Dendritic cell treated with granulocyte-macrophage colony-stimulating factor and Interleukin-4, amounts not matched to agents 40 ng/mL and 50 ng/mL, for 4 days (primary cell): ENCODE measurements at regions of chr12 and their contacts with region 1.

Region 1: DNA sequence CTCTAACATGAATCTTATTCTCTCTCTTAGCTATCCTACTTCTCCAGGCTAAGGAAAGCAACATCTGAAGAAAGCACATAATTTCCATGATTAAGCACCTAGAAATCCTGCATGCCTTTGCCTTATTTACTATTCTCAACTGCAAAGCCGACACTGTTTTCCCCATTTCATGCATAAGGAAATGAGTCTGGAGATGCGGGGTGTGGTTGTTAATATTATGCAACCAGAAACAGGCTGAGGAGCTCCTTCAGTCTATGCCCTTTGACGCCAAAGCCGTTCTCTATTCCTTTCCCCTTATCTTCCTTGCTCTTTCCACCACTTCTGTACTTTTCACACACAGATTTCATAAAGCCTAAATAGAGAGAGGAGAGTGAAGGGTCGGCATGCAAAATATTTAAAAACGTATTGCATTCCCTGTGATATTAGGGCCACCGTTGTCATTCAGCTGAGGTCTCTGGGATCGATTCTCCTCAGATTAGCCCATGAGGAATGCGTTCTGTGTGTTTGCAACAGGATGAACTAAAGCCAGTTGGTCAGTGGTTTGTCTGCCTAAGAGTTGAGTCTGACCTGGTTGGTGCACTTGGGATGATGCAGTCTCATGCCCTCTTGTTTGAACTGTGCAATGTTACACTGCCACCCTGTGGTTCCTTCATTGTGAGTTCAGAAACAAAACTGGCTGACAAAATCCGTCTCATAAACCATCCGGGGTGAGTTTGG is 53.1 kb upstream of the PLEKHG7 start:
- H3K4me3 Mint-ChIP-seq: no peak overlapping the region
- H3K27ac Mint-ChIP-seq: peak overlapping the region; percentile 55
- H3K4me1 Mint-ChIP-seq: peaks cover 11% of the 10 kb centered on the region
- H3K27me3 Mint-ChIP-seq: peaks cover 2% of the 10 kb centered on the region

Region 2: DNA sequence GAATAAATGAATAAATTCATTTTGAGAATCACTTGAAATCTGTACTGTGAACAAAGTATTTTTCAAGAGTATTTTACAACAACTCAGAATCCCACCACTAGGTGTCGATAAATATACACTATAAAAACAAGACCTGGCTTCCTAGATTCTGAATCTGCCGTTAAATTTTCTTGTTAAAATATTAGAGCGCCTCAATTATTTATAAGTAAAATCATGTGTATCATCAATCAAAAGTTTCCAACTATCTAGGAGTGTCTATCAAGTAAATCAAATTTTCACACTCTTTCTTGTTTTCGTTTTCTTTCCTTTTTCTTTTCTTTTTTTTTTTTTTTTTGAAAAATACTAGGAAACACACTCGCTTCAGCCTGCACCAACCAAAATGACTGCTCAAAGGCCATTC is 1287.8 kb before region 1 on chr12:
- intact Hi-C with region 1: loop called (anchors 5 kb)
- H3K4me3 Mint-ChIP-seq: no peak overlapping the region
- H3K27ac Mint-ChIP-seq: no peak overlapping the region
- H3K4me1 Mint-ChIP-seq: no peaks in the 10 kb centered on the region
- H3K27me3 Mint-ChIP-seq: no peaks in the 10 kb centered on the region

Region 3: GRCh38 chr12:91382081-91382543 is 1267.6 kb before region 1 on chr12:
- intact Hi-C with region 1: loop called (anchors 2 kb)
- H3K4me3 Mint-ChIP-seq: peak overlapping the region; percentile 62
- H3K27ac Mint-ChIP-seq: no peak overlapping the region
- H3K4me1 Mint-ChIP-seq: peaks cover 21% of the 10 kb centered on the region
- H3K27me3 Mint-ChIP-seq: peaks cover 8% of the 10 kb centered on the region

Region 4: GRCh38 chr12:91577586-91578539 is 1071.8 kb before region 1 on chr12:
- intact Hi-C with region 1: loop called (anchors 2 kb)
- H3K4me3 Mint-ChIP-seq: peak overlapping the region; percentile 13
- H3K27ac Mint-ChIP-seq: no peak overlapping the region
- H3K4me1 Mint-ChIP-seq: no peaks in the 10 kb centered on the region
- H3K27me3 Mint-ChIP-seq: peaks cover 2% of the 10 kb centered on the region

Region 5: GRCh38 chr12:92502417-92503028 is 147.1 kb before region 1 on chr12:
- intact Hi-C with region 1: no loop called
- H3K4me3 Mint-ChIP-seq: no peak overlapping the region
- H3K27ac Mint-ChIP-seq: peak overlapping the region; percentile 95
- H3K4me1 Mint-ChIP-seq: peaks cover 49% of the 10 kb centered on the region
- H3K27me3 Mint-ChIP-seq: no peaks in the 10 kb centered on the region

Region 6: DNA sequence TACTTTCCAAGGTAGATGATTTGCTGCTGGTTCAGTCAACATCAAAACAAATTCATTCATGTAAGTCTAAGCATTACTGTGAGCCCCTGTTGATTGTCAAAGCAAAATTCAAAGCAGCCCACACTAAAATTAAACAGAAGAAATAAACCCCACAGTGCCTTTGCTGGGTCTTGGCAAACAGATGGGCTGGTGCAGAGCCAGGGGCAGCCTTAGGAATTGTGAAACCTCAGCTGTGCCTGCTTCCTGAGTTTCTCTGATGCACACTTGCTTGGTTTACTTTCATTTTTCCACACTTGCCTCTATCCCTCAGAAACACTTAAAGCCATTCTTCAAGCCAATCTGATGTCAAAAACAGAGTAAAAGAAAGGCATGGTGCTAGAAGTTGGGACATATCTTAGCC is 46.5 kb after region 1 on chr12:
- intact Hi-C with region 1: no loop called
- H3K4me3 Mint-ChIP-seq: no peak overlapping the region
- H3K27ac Mint-ChIP-seq: no peak overlapping the region
- H3K4me1 Mint-ChIP-seq: no peaks in the 10 kb centered on the region
- H3K27me3 Mint-ChIP-seq: no peaks in the 10 kb centered on the region